ENCODE measurements at regions of chr11 and their contacts with region 1.

Region 1: GRCh38 chr11:113532697-113533424 is 57.7 kb upstream of the DRD2 start:
- DNase-seq: peak; percentile 19 to 42 (median 34)
- H3K4me3 ChIP-seq: no peak overlapping the region
- H3K4me3 Mint-ChIP-seq: peak overlapping the region in 1 of 8 donors; percentile 32
- H3K27ac ChIP-seq: no peak overlapping the region
- H3K27ac Mint-ChIP-seq: no peak overlapping the region
- H3K4me1 ChIP-seq: no peaks in the 10 kb centered on the region
- H3K4me1 Mint-ChIP-seq: peaks cover 0 to 2% (median 0%) of the 10 kb centered on the region in 4 donors
- H3K27me3 ChIP-seq: no peaks in the 10 kb centered on the region
- H3K27me3 Mint-ChIP-seq: peaks cover 6 to 18% of the 10 kb centered on the region in 2 donors

Region 2: DNA sequence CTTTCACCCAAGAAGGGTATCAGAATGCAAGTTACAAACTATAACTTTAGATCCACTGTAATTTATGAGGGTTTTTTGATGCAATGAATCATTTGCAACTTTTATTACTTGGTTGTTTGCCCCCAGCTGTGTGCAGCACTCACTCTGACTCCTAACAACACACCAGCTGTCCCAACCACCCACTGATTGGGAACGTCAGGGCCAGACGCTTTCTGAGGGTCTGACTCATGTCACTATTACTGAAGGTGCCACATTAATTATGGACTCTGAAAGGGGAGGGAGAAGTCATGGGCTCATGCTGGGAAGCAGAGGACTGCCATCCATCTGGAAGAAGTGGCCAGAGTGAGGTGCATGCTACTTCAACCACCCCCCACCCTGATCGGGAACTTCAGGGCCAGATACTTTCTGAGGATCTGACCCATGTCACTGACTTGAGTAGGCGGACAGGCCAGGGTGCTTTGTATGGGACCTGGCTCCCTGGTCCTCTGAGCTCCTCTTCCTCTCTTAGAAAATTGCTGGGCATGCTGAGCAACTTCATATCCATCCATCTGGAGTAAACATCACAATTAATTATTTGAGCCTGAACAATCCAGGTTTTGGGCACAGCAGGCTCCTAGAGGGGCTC is 12.8 kb before region 1 on chr11:
- CTCF ChIA-PET with region 1: interaction called, 43 read pairs
- POLR2A ChIA-PET with region 1: no interaction called
- intact Hi-C with region 1: no loop called
- DNase-seq: no peak
- H3K4me3 ChIP-seq: no peak overlapping the region
- H3K4me3 Mint-ChIP-seq: no peak overlapping the region
- H3K27ac ChIP-seq: no peak overlapping the region
- H3K27ac Mint-ChIP-seq: no peak overlapping the region
- H3K4me1 ChIP-seq: no peaks in the 10 kb centered on the region
- H3K4me1 Mint-ChIP-seq: no peaks in the 10 kb centered on the region
- H3K27me3 ChIP-seq: no peaks in the 10 kb centered on the region
- H3K27me3 Mint-ChIP-seq: peaks cover 17 to 21% of the 10 kb centered on the region in 2 donors